ENCODE measurements at regions of chr10 and their contacts with region 1.

Region 1: GRCh38 chr10:127853868-127854768 is 38.6 kb downstream of the CLRN3 start:
- DNase-seq: peak in 1 of 2 experiments; percentile 26
- H3K4me3 ChIP-seq: no peak overlapping the region
- H3K27ac ChIP-seq: no peak overlapping the region
- H3K4me1 ChIP-seq: no peaks in the 10 kb centered on the region
- H3K27me3 ChIP-seq: peaks cover 16% of the 10 kb centered on the region; the same call in 1 of the 2 replicates
- CTCF ChIP-seq: peak; percentile 71

Region 2: GRCh38 chr10:127462643-127463285 is 391.4 kb before region 1 on chr10:
- CTCF ChIA-PET with region 1: no interaction called
- POLR2A ChIA-PET with region 1: no interaction called
- intact Hi-C with region 1: no loop called
- DNase-seq: no peak
- H3K4me3 ChIP-seq: no peak overlapping the region
- H3K27ac ChIP-seq: no peak overlapping the region
- H3K4me1 ChIP-seq: no peaks in the 10 kb centered on the region
- H3K27me3 ChIP-seq: peaks cover 46% of the 10 kb centered on the region
- CTCF ChIP-seq: no peak

Region 3: GRCh38 chr10:127888521-127889312 is 34.6 kb after region 1 on chr10:
- CTCF ChIA-PET with region 1: no interaction called
- POLR2A ChIA-PET with region 1: interaction called, 17 read pairs
- intact Hi-C with region 1: no loop called
- DNase-seq: no peak
- H3K4me3 ChIP-seq: no peak overlapping the region
- H3K27ac ChIP-seq: no peak overlapping the region
- H3K4me1 ChIP-seq: no peaks in the 10 kb centered on the region
- H3K27me3 ChIP-seq: no peaks in the 10 kb centered on the region
- CTCF ChIP-seq: no peak